ENCODE measurements at regions of chr9 and their contacts with region 1.

Region 1: DNA sequence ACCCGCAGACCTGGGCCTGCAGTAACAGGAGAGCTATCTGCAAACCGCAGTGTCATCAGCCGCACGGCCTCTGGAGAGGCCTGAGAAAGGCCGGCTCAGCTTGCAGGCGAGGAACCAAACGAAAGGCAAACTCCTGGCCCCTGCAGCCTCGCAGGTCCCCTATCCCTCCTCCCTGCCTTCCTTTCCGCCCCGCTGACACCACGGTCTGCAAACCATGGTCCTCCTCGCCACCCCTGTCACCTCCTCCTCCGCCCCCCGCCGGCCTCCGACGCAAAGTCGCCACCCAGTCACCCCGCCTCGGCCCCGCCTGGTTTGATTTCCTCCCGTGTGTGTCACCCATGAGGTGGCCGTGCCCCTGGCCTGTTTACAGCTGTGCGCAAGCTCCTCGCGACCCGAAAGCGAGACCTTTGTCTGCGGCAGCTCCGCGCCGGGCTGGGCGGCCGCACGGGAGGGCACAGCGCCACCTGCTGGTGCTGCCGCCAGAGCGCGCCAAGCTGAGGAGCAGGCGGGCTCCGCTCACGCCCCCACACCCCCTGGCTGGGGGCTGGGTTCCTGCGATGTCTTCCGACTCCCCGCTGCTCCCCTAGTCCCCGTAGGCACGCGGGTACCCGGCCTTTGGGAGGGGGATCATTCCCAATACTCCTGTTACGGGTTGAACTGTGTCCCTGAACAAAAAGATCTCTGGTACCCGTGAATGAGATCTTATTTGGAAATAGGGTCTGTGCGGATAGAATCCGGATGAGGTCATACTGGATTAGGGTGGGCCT is 19.4 kb downstream of the GBGT1 start:
- DNase-seq: peak; percentile 80 to 86
- ATAC-seq: peak; percentile 28 to 81
- H3K4me3 ChIP-seq: peak overlapping the region; percentile 39
- H3K27ac ChIP-seq: peak overlapping the region; percentile 60 to 86
- H3K4me1 ChIP-seq: peaks cover 39% of the 10 kb centered on the region
- CTCF ChIP-seq: peak; percentile 97
- EP300 ChIP-seq: no peak
- POLR2A ChIP-seq: no peak
- RAD21 ChIP-seq: peak; percentile 80 to 92

Region 2: DNA sequence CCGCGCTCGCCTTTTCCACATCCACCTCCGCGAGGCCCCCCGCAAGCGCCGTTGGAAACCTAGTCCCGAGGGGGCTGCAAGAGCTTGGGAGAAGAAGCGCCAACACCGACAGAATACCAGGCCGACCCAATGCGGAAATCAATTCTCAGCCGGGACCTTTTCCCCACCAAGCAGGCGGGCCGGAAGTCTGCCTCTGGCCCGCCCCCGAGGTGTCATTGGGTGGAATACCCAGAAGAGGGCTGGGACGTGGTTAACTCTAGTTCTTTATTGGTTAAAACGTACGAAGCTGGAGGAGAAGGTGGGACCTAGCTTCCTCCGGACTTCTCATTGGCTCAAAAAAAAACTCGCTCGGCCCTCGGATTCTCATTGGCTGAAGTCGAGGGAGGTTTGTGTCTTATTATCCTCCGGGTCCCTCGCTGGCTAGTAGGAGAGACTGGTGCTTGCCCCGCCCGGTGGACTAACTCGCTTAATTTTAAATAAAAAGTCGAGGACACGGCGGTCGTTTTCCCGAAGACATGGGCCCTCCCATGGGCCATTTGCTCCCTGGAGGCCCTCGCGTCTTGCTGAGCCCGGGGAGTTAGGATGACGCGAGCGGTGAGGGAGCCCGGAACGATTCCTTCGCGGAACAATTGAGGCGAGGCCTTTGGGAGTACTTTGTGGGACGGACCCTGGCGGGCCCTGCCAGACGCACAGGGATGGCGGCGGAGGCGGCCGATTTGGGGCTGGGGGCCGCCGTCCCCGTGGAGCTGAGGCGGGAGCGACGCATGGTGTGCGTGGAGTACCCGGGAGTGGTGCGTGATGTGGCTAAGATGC is 113.8 kb before region 1 on chr9 and contains the start of gene GTF3C5:
- CTCF ChIA-PET with region 1: interaction called, 22 read pairs
- POLR2A ChIA-PET with region 1: interaction called, 25 read pairs
- DNase-seq: peak; percentile 99 to 100
- ATAC-seq: peak; percentile 98 to 99
- H3K4me3 ChIP-seq: peak within 1 kb of the TSS; percentile 67
- H3K27ac ChIP-seq: peak within 1 kb of the TSS; percentile 83 to 96
- H3K4me1 ChIP-seq: peaks cover 17% of the 10 kb centered on the region
- CTCF ChIP-seq: no peak
- EP300 ChIP-seq: no peak
- POLR2A ChIP-seq: peak; percentile 80
- RAD21 ChIP-seq: no peak
- polyA plus RNA-seq, gene GTF3C5: 57.2 and 57.4 TPM in 2 replicates

Region 3: GRCh38 chr9:133048569-133048968 is 95.8 kb before region 1 on chr9:
- CTCF ChIA-PET with region 1: interaction called, 12 read pairs
- POLR2A ChIA-PET with region 1: no interaction called
- DNase-seq: peak; percentile 35 to 46
- ATAC-seq: peak; percentile 68 to 89; a peak in 5 of 6 replicates
- H3K4me3 ChIP-seq: no peak overlapping the region
- H3K27ac ChIP-seq: no peak overlapping the region
- H3K4me1 ChIP-seq: no peaks in the 10 kb centered on the region
- CTCF ChIP-seq: peak; percentile 40
- EP300 ChIP-seq: no peak
- POLR2A ChIP-seq: no peak
- RAD21 ChIP-seq: peak; percentile 16 to 49; a peak in 2 of 5 replicates

Region 4: GRCh38 chr9:133075925-133076630 is 68.2 kb before region 1 on chr9:
- CTCF ChIA-PET with region 1: interaction called, 45 read pairs
- POLR2A ChIA-PET with region 1: no interaction called
- DNase-seq: no peak
- ATAC-seq: peak in 1 of 2 experiments; percentile 46; a peak in 3 of 6 replicates
- H3K4me3 ChIP-seq: no peak overlapping the region
- H3K27ac ChIP-seq: no peak overlapping the region
- H3K4me1 ChIP-seq: no peaks in the 10 kb centered on the region
- CTCF ChIP-seq: no peak
- EP300 ChIP-seq: no peak
- POLR2A ChIP-seq: no peak
- RAD21 ChIP-seq: no peak

Region 5: DNA sequence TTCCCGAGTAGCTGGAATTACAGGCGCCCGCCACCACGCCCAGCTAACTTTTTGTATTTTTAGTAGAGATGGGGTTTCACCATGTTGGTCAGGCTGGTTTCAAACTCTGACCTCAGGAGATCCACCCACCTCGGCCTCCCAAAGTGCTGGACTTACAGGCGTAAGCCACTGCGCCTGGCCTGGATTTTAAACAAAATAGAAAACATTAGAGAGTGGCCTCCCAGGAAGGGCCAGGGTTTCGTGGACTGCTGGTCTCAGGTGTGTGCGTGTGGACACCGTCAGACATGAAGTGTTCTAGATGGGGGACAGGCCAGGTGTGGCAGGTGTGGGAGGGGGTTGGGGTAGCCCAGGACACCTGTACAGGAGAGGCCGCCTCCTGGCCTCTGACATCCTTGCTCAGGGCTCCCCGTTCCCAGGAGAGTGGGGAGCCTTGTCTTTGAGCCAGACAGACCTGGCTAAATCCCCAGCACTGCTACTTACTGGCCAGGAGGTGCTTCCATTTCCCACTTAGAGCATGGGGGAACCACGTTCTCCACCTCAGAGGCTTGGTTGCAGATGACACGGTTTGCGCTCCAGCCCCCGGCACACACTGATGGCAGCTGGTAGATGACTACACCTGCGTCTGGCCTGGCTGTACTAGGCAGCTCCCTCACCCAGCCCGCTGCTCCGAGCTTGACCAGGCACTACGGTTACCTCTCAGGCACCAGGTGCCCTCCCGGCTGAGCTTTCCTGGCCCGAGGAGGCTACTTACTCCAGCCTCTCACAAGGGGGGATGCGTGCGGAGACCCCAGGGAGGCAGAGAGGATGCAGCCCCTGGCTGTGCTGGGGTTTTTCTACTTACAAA is 26.6 kb after region 1 on chr9:
- CTCF ChIA-PET with region 1: interaction called, 20 read pairs
- POLR2A ChIA-PET with region 1: no interaction called
- DNase-seq: no peak
- ATAC-seq: peak in 1 of 2 experiments; percentile 19; a peak in 1 of 6 replicates
- H3K4me3 ChIP-seq: no peak overlapping the region
- H3K27ac ChIP-seq: no peak overlapping the region
- H3K4me1 ChIP-seq: peaks cover 25% of the 10 kb centered on the region
- CTCF ChIP-seq: no peak
- EP300 ChIP-seq: no peak
- POLR2A ChIP-seq: no peak
- RAD21 ChIP-seq: no peak